PC-3 (cell line): ENCODE measurements at regions of chr6 and their contacts with region 1.

Region 1: GRCh38 chr6:111973118-111973761 is 80.7 kb upstream of the CCN6 start:
- DNase-seq: peak; percentile 50
- ATAC-seq: peak; percentile 75
- H3K4me3 ChIP-seq: peak overlapping the region; percentile 52; the same call in 1 of the 2 replicates
- H3K27ac ChIP-seq: peak overlapping the region; percentile 48
- H3K4me1 ChIP-seq: peaks cover 14% of the 10 kb centered on the region
- H3K27me3 ChIP-seq: no peaks in the 10 kb centered on the region
- CTCF ChIP-seq: no peak

Region 2: GRCh38 chr6:111894272-111894671 is 79.0 kb before region 1 on chr6:
- CTCF ChIA-PET with region 1: no interaction called
- POLR2A ChIA-PET with region 1: no interaction called
- intact Hi-C with region 1: no loop called
- DNase-seq: peak; percentile 57
- ATAC-seq: no peak
- H3K4me3 ChIP-seq: no peak overlapping the region
- H3K27ac ChIP-seq: no peak overlapping the region
- H3K4me1 ChIP-seq: peaks cover 8% of the 10 kb centered on the region; the same call in 1 of the 2 replicates
- H3K27me3 ChIP-seq: no peaks in the 10 kb centered on the region
- CTCF ChIP-seq: no peak

Region 3: DNA sequence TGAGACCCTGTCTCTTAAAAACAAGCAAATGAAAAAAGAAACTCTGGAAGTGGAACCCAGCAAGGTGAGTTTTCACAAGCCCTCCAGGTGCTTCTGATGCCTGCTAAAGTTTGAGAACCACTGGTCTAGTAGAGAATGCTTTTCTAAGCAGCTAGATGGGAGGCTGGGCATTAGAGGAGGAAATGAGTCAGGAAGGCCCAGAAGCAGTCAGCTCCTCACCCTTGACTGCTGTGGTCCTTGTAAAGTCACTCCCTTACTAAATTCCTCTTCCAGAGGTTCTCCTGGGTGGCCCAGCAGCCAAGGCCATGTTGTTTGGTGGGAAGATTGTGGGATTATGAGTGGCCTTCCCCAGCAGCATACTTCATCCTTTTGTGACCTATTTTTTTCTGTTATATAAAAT is 47.9 kb before region 1 on chr6:
- CTCF ChIA-PET with region 1: no interaction called
- POLR2A ChIA-PET with region 1: no interaction called
- intact Hi-C with region 1: loop called (anchors 5 kb)
- DNase-seq: peak; percentile 57
- ATAC-seq: peak; percentile 43
- H3K4me3 ChIP-seq: no peak overlapping the region
- H3K27ac ChIP-seq: peak overlapping the region; percentile 97
- H3K4me1 ChIP-seq: peaks cover 37% of the 10 kb centered on the region
- H3K27me3 ChIP-seq: no peaks in the 10 kb centered on the region
- CTCF ChIP-seq: no peak